IMR-90 (cell line): ENCODE measurements at regions of chr16 and their contacts with region 1.

Region 1: GRCh38 chr16:86575754-86576557 is 2.4 kb upstream of the FOXL1 start:
- DNase-seq: peak; percentile 97
- ATAC-seq: peak; percentile 63
- H3K4me3 ChIP-seq: peak overlapping the region; percentile 60
- H3K27ac ChIP-seq: peak overlapping the region; percentile 84
- H3K4me1 ChIP-seq: peaks cover 11% of the 10 kb centered on the region
- H3K27me3 ChIP-seq: no peaks in the 10 kb centered on the region
- CTCF ChIP-seq: peak; percentile 89
- POLR2A ChIP-seq: peak; percentile 95
- RAD21 ChIP-seq: peak; percentile 81

Region 2: DNA sequence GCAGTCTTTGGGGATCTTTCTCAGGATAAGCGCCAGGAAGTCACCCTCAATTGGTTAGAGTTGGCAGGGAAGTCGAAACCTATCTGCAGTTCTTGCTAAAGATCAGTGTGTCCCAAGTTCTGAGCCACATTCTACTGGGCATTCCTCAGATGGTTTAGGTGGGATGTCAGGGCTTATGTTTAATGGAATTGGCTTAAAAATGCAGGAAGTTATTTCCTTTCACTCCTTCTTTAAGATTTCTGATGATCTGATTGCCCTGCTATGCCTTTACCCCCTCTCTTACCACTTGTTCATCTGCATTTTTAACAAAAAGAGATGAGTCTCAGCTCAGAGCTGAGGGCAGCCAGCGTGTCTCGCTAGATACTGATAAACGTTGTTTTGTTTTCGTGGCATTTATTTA is 33.2 kb after region 1 on chr16:
- CTCF ChIA-PET with region 1: interaction called, 4 read pairs
- POLR2A ChIA-PET with region 1: interaction called, 3 read pairs
- dilution Hi-C with region 1: no loop called
- in situ Hi-C with region 1: no loop called
- intact Hi-C with region 1: loop called (anchors 2 kb)
- DNase-seq: peak; percentile 94
- ATAC-seq: peak; percentile 77
- H3K4me3 ChIP-seq: no peak overlapping the region
- H3K27ac ChIP-seq: peak overlapping the region; percentile 92
- H3K4me1 ChIP-seq: peaks cover 28% of the 10 kb centered on the region
- H3K27me3 ChIP-seq: no peaks in the 10 kb centered on the region
- CTCF ChIP-seq: no peak
- POLR2A ChIP-seq: no peak
- RAD21 ChIP-seq: no peak

Region 3: DNA sequence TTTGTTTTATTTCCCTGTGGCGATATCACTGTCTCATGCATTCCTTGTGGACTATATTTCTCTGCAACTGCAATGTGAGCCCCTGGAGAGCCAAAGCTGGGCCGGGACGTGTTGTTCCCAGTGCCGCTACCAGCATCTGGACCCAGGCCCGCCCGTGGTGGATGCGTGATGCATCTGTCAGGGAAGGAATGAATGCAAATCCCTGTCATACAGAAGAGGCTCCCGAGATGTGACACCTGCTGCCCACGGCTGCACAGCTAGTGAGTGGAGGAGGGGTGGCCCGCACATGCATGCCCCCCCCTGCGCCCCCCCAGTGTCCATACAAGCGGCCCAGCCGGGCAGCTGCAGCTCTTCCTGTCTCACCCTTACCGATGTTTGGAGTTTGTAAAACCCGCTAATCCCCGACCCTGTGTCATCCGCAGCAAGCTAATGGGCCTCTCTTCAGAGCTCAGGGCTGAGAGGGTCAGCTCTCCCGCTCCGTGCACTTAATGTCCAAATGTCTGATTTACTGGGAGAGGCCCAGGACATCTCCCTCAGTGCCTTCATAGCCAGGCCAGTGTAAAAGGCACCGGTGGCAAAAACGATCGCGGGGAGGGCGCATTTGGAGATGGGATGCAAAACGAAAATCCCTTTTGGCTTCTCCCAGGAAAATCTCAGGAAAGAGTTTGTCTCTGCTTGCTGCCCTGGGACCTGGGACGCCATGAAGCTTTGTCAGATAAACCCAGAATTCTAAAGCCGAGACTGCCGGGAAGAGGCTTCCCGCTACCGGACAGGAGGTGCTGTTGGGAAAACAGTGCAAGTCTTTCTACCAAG is 94.2 kb after region 1 on chr16:
- CTCF ChIA-PET with region 1: no interaction called
- POLR2A ChIA-PET with region 1: interaction called, 7 read pairs
- dilution Hi-C with region 1: no loop called
- in situ Hi-C with region 1: loop called (anchors 5 kb)
- intact Hi-C with region 1: loop called (anchors 2 kb)
- DNase-seq: peak; percentile 61
- ATAC-seq: peak; percentile 71
- H3K4me3 ChIP-seq: no peak overlapping the region
- H3K27ac ChIP-seq: peak overlapping the region; percentile 61
- H3K4me1 ChIP-seq: peaks cover 29% of the 10 kb centered on the region
- H3K27me3 ChIP-seq: no peaks in the 10 kb centered on the region
- CTCF ChIP-seq: no peak
- POLR2A ChIP-seq: no peak
- RAD21 ChIP-seq: no peak

Region 4: GRCh38 chr16:86834451-86835035 is 258.6 kb after region 1 on chr16:
- CTCF ChIA-PET with region 1: interaction called, 5 read pairs
- POLR2A ChIA-PET with region 1: no interaction called
- dilution Hi-C with region 1: no loop called
- in situ Hi-C with region 1: no loop called
- intact Hi-C with region 1: loop called (anchors 5 kb)
- DNase-seq: peak; percentile 88
- ATAC-seq: peak; percentile 87
- H3K4me3 ChIP-seq: no peak overlapping the region
- H3K27ac ChIP-seq: no peak overlapping the region
- H3K4me1 ChIP-seq: peaks cover 12% of the 10 kb centered on the region
- H3K27me3 ChIP-seq: peaks cover 6% of the 10 kb centered on the region
- CTCF ChIP-seq: peak; percentile 57
- POLR2A ChIP-seq: no peak
- RAD21 ChIP-seq: peak; percentile 56

Region 5: GRCh38 chr16:87062569-87063442 is 486.9 kb after region 1 on chr16:
- CTCF ChIA-PET with region 1: interaction called, 13 read pairs
- POLR2A ChIA-PET with region 1: interaction called, 3 read pairs
- dilution Hi-C with region 1: no loop called
- in situ Hi-C with region 1: no loop called
- intact Hi-C with region 1: loop called (anchors 2 kb)
- DNase-seq: peak; percentile 67
- ATAC-seq: peak; percentile 92
- H3K4me3 ChIP-seq: peak overlapping the region; percentile 26; the same call in 1 of the 2 replicates
- H3K27ac ChIP-seq: no peak overlapping the region
- H3K4me1 ChIP-seq: no peaks in the 10 kb centered on the region; the same call in 1 of the 2 replicates
- H3K27me3 ChIP-seq: no peaks in the 10 kb centered on the region; the same call in 1 of the 2 replicates
- CTCF ChIP-seq: peak; percentile 91
- POLR2A ChIP-seq: no peak
- RAD21 ChIP-seq: peak; percentile 90